OCI-LY7 (cell line): ENCODE measurements at regions of chr3 and their contacts with region 1.

Region 1: DNA sequence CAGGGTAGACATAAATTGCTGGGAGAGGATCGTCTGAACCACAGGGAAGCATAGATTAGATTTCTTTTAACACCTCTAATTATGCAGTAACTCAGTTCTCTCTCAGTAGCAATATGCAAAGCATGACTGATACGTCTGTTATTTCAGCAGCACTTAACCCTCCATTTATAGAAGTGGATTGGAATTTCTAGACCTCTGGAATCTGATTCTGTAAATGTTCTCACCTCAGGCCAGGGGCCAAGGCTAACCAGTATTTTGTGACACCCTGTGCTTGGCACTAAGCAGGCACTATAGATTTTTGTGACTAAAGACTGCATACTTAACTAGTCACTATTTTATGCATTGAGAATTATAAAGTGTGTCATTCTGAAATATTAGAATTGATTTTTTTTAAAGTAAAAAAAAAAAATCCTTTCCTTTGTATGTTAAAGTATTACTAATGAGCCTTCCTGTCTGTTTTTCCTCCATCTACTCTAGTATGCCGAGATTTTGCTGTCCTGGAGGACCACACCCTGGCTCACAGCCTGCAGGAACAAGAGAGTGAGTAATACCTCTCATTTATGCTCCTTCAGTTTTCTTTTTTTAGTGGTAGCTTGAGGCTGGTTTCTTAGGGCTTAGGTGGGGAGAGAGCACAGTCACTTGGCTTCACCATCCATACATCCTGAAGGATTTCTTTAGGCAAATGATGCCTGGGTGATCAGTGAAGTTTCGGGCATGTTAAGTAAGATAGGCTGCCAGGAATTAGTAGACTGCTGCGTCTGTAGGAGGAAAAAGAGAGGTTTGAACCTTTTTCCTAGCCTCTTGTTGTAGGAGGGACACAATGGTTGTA is 26.5 kb upstream of the UTS2B start:
- DNase-seq: no peak
- H3K4me3 ChIP-seq: no peak overlapping the region
- H3K27ac ChIP-seq: no peak overlapping the region
- H3K4me1 ChIP-seq: peaks cover 24% of the 10 kb centered on the region
- CTCF ChIP-seq: no peak

Region 2: GRCh38 chr3:191340976-191341375 is 15.8 kb before region 1 on chr3:
- CTCF ChIA-PET with region 1: no interaction called
- POLR2A ChIA-PET with region 1: interaction called, 23 read pairs
- intact Hi-C with region 1: no loop called
- DNase-seq: no peak
- H3K4me3 ChIP-seq: no peak overlapping the region
- H3K27ac ChIP-seq: no peak overlapping the region
- H3K4me1 ChIP-seq: peaks cover 19% of the 10 kb centered on the region
- CTCF ChIP-seq: no peak

Region 3: GRCh38 chr3:191376516-191377141 is 19.8 kb after region 1 on chr3:
- CTCF ChIA-PET with region 1: no interaction called
- POLR2A ChIA-PET with region 1: interaction called, 12 read pairs
- intact Hi-C with region 1: no loop called
- DNase-seq: no peak
- H3K4me3 ChIP-seq: no peak overlapping the region
- H3K27ac ChIP-seq: no peak overlapping the region
- H3K4me1 ChIP-seq: peaks cover 21% of the 10 kb centered on the region
- CTCF ChIP-seq: no peak